ENCODE measurements at regions of chr2 and their contacts with region 1.

Region 1: GRCh38 chr2:217886720-217887309 is 116.0 kb downstream of the TNS1 start:
- DNase-seq: peak; percentile 88
- ATAC-seq: peak; percentile 24

Region 2: DNA sequence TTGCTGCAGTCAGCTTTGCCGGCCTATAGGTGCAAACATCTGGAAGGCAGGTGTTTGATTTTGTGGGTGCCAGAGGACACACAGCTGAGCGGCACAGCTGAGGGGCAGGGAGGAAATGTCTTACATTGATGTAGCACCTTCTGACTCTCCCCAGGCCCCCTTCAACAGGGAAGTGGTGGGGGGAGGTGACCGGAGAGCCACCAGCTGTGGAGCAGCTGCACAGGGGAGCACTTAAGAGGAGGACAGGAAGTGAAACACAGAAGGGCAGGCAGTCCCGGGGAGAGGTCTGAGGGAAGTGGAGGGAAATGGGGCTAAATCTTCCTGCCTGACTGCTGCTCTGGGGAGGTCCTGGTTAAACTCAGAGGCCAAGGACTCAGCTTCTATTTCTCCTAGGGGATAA is 293.1 kb before region 1 on chr2:
- intact Hi-C with region 1: no loop called
- DNase-seq: no peak
- ATAC-seq: peak; percentile 49

Region 3: DNA sequence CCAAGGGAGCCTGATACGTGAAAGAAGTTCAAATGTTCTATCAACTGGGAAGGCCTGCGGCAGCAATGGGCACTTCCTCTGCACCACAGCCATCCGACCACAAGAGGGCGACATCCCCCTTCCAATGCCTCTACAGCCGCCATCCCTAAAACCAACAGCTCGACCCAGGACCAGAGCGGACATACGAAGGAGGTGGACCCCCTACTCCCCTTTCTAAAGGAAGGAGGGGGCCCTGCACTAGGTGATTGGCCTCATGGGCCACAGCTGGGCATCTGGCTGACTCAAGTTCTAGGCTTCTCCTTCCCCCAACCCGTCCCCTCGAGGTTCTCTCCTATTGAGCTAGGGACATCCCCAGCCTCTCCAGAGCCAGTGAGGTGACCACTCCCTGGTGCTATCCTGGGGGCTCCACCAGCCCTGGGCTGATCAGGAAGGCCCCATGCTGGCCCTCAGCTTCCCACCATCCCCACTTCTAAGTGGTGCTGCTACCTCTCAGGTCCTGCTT is 101.2 kb before region 1 on chr2:
- intact Hi-C with region 1: loop called (anchors 5 kb)
- DNase-seq: peak; percentile 92
- ATAC-seq: peak; percentile 85

Region 4: DNA sequence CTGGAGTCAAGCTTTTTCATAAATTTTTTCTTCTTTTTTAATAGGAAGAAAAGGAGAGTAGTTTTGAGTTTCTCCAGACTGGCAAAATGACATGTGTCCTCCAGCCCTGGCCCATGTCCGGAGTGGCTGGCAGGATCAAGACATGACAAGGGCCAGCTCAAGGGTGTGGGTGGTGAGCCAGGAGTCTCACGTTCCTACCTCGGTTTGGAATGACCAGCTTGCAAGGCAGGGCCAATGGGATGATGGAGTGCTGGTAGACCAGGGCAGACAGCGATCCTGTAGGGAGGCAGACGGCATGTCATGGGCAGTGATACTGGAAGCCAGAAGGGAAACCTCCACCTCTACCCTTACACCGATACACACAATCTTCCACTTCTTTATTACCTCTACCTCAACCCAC is 74.6 kb before region 1 on chr2:
- intact Hi-C with region 1: loop called (anchors 2 kb)
- DNase-seq: no peak
- ATAC-seq: no peak

Region 5: DNA sequence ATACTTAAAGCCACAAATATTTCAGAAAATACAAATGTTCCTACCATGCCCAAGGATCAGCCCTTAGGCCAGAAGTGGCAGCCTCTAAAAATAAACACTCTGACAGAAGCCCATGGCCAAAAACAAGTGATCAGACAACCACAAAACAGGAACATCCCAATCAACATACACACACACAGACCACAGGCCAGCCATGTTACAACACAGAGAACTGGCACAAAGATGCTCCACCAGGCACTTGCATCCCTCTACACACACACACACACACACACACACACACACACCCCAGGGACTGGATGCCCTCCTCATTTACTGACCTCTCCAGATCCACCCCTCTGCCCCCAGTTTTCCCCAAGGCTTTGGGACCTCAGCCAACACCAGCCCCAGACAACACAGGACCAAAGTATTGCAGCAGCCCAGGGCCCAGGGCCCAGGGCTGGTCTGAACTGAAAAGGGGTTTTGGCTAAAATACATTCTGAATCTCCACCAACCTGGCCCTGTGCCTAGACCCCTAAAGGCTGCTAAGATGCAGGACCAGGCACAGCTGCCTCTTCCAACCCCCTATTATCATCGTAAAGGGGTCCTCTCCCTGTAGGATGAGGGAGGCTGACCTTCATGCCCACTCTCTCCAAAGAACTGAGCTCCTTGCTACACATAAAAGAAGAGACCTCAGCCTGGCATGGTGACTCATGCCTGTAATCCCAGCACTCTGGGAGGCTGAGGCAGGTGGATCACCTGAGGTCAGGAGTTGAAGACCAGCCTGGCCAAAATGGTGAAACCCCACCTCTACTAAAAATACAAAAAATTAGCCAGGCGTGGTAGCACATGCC is 35.4 kb before region 1 on chr2:
- intact Hi-C with region 1: loop called (anchors 2 kb)
- DNase-seq: no peak
- ATAC-seq: peak; percentile 25

Region 6: GRCh38 chr2:217905395-217905794 is 18.6 kb after region 1 on chr2:
- intact Hi-C with region 1: no loop called
- DNase-seq: no peak
- ATAC-seq: peak; percentile 5

Region 7: GRCh38 chr2:217988014-217988839 is 101.4 kb after region 1 on chr2:
- intact Hi-C with region 1: loop called (anchors 5 kb)
- DNase-seq: peak; percentile 95
- ATAC-seq: peak; percentile 84

Region 8: DNA sequence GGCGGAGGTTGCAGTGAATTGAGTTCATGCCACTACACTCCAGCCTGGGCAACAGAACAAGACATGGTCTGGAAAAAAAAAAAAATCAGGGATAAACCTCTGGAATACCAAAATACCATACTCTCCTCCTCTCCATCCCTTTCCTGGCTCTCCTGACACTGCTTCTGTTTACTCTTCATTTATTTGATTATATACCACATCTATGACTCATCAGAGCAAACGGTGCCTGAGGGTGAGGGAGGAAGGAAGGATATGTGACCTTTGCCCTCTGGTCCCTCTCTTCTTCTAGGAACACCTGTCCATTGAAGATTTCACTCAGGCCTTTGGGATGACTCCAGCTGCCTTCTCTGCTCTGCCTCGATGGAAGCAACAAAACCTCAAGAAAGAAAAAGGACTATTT is 562.1 kb after region 1 on chr2:
- intact Hi-C with region 1: no loop called
- DNase-seq: no peak
- ATAC-seq: no peak